Calu3 (cell line): ENCODE measurements at regions of chr17 and their contacts with region 1.

Region 1: GRCh38 chr17:60525685-60526514 is at the start of gene APPBP2:
- DNase-seq: peak; percentile 74
- H3K4me3 Mint-ChIP-seq: peak within 1 kb of the TSS; percentile 88
- H3K27ac Mint-ChIP-seq: peak within 1 kb of the TSS; percentile 87
- H3K4me1 Mint-ChIP-seq: peaks cover 10% of the 10 kb centered on the region
- H3K27me3 Mint-ChIP-seq: no peaks in the 10 kb centered on the region
- CTCF ChIP-seq: no peak
- total RNA-seq, gene APPBP2: 24.3 and 27.2 TPM in 2 replicates

Region 2: DNA sequence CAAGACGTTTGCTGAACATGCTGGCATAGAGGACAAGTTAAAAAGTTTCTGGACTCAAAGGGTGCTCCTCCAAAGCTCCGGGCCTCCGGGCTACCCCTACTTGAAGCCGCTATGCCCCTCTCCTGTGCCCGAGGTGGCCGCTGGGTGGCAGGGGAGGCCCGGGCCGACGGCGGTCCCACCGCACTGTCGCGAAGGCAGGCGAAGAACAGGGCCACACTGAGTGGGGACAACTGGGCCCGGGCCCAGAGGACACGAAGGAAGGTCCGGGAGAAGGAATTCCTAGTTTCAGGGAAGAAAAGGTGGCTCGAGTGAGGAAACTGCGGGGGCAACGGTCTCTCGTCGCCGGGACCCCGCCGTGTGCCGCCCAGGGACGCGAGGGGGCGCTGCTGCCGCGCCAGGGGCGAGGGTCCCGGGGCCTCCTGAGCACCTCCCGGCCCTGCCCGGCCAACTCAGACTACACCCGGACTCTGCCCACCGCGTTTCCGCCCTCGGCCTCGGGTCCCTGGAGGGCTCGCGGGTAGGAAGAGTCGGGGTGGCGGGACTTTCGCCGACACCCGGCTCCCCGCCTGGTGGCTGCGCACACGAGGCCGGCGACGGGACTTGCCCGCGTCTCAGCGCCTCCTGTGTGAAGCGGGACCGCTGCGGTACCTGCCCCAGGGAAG is 104.5 kb before region 1 on chr17:
- CTCF ChIA-PET with region 1: no interaction called
- intact Hi-C with region 1: no loop called
- DNase-seq: peak; percentile 75
- H3K4me3 Mint-ChIP-seq: peak overlapping the region; percentile 67
- H3K27ac Mint-ChIP-seq: no peak overlapping the region
- H3K4me1 Mint-ChIP-seq: no peaks in the 10 kb centered on the region
- H3K27me3 Mint-ChIP-seq: no peaks in the 10 kb centered on the region
- CTCF ChIP-seq: peak; percentile 80

Region 3: DNA sequence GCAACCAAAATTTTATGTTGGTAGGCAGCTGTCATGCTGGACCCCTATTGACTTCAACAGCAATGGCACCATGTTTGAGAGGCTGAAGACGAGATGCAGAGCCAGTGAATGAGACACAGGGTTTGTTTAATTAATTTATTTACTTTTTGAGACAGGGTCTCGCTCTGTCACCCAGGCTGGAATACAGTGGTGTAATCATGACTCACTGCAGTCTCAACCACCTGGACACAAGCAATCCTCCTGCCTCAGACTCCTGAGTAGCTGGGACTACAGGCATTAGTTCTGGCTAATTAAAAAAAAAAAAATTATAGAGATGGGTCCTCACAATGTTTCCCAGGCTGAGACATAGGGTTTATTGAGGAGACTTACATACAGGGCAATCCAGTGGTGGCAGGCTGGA is 37.8 kb after region 1 on chr17:
- CTCF ChIA-PET with region 1: interaction called, 6 read pairs
- intact Hi-C with region 1: loop called (anchors 5 kb)
- DNase-seq: no peak
- H3K4me3 Mint-ChIP-seq: no peak overlapping the region
- H3K27ac Mint-ChIP-seq: no peak overlapping the region
- H3K4me1 Mint-ChIP-seq: peaks cover 7% of the 10 kb centered on the region
- H3K27me3 Mint-ChIP-seq: no peaks in the 10 kb centered on the region
- CTCF ChIP-seq: no peak

Region 4: DNA sequence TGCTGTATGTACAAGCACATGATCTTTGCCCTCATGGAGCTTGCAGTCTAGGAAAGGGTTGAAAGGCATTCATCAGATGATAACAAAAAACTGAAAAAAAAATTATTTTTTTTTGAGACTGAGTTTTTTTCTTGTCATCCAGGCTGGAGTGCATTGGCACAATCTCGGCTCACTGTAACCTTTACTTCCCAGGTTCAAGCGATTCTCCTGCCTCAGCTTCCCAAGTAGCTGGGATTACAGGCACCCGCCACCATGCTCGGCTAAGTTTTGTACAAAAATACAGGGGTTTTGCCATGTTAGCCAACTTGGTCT is 113.1 kb after region 1 on chr17:
- CTCF ChIA-PET with region 1: no interaction called
- intact Hi-C with region 1: loop called (anchors 5 kb)
- DNase-seq: no peak
- H3K4me3 Mint-ChIP-seq: no peak overlapping the region
- H3K27ac Mint-ChIP-seq: no peak overlapping the region
- H3K4me1 Mint-ChIP-seq: no peaks in the 10 kb centered on the region
- H3K27me3 Mint-ChIP-seq: no peaks in the 10 kb centered on the region
- CTCF ChIP-seq: no peak